Activated naive CD8-positive, alpha-beta T cell treated with anti-CD3 and anti-CD28 coated beads, Interleukin-2, amount 10 ng/mL, durations not matched to agents 7 days and 5 days (primary cell): ENCODE measurements at regions of chr3 and their contacts with region 1.

Region 1: GRCh38 chr3:46078712-46079400 is 51.6 kb upstream of the XCR1 start:
- DNase-seq: peak; percentile 73
- ATAC-seq: peak; percentile 96
- H3K4me3 Mint-ChIP-seq: peak overlapping the region; percentile 44
- H3K27ac Mint-ChIP-seq: peak overlapping the region; percentile 51
- H3K4me1 Mint-ChIP-seq: peaks cover 39% of the 10 kb centered on the region
- H3K27me3 Mint-ChIP-seq: peaks cover 3% of the 10 kb centered on the region

Region 2: GRCh38 chr3:45938864-45939263 is 140.0 kb before region 1 on chr3:
- POLR2A ChIA-PET with region 1: interaction called, 14 read pairs
- DNase-seq: peak; percentile 72
- ATAC-seq: peak; percentile 67
- H3K4me3 Mint-ChIP-seq: no peak overlapping the region
- H3K27ac Mint-ChIP-seq: peak overlapping the region; percentile 63
- H3K4me1 Mint-ChIP-seq: peaks cover 47% of the 10 kb centered on the region
- H3K27me3 Mint-ChIP-seq: no peaks in the 10 kb centered on the region